ENCODE measurements at regions of chr11 and their contacts with region 1.

Region 1: DNA sequence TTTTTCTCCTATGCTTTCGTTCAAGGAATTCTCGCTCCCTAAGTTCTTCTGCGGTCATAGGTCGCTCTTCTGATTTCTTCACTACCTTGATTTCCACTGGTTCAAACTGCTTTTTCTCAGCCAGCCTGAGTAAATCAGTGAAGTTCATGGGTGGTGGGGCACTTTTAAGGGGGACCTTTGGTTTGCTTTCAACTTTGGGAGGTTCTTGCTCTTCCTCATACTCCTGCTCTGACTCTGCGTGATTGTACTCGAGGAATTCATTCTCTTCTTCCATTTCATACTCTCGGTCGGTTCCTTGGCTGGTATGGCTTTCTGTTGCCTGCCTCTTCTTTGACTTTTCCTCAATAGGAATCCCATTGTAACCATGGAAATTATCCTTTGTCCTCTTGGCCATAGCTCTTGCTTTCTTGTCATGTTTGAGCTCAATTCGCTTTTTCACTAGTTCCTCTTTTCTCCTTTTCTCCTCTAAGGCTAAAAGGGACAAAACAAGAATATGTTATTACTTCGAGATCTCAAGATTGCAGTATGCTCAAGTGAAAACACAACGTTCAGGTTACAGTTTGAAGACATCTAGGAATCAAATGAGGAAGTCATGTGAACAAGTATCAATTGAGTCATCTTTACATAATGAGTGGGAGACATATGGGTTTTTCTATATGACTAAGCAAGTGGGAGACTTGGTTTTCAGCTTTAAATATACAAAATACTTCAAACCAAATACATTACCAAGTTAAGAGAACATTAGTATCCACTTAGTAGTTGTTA is 16.2 kb downstream of the MISFA start:
- DNase-seq: no peak
- ATAC-seq: peak; percentile 44
- H3K4me3 ChIP-seq: no peak overlapping the region
- H3K4me3 Mint-ChIP-seq: peak overlapping the region in 1 of 10 donors; percentile 71
- H3K27ac ChIP-seq: no peak overlapping the region
- H3K27ac Mint-ChIP-seq: peak overlapping the region in 3 of 9 donors; percentile 26 to 72 (median 28)
- H3K4me1 ChIP-seq: peaks cover 21 to 29% of the 10 kb centered on the region in 2 donors
- H3K4me1 Mint-ChIP-seq: peaks cover 26 to 59% (median 47%) of the 10 kb centered on the region in 7 donors
- H3K27me3 ChIP-seq: no peaks in the 10 kb centered on the region
- H3K27me3 Mint-ChIP-seq: no peaks in the 10 kb centered on the region

Region 2: GRCh38 chr11:18578975-18579598 is 36.7 kb before region 1 on chr11:
- CTCF ChIA-PET with region 1: interaction called, 3 read pairs
- POLR2A ChIA-PET with region 1: no interaction called
- intact Hi-C with region 1: loop called in 1 of 2 experiments (anchors 1 kb)
- DNase-seq: no peak
- ATAC-seq: peak; percentile 24
- H3K4me3 ChIP-seq: no peak overlapping the region
- H3K4me3 Mint-ChIP-seq: peak overlapping the region in 2 of 10 donors; percentile 29 to 67
- H3K27ac ChIP-seq: no peak overlapping the region
- H3K27ac Mint-ChIP-seq: peak overlapping the region in 1 of 9 donors; percentile 51
- H3K4me1 ChIP-seq: no peaks in the 10 kb centered on the region
- H3K4me1 Mint-ChIP-seq: peaks cover 0 to 40% (median 2%) of the 10 kb centered on the region in 7 donors
- H3K27me3 ChIP-seq: no peaks in the 10 kb centered on the region
- H3K27me3 Mint-ChIP-seq: no peaks in the 10 kb centered on the region

Region 3: GRCh38 chr11:18588297-18589252 is 27.2 kb before region 1 on chr11 and contains the start of gene UEVLD:
- CTCF ChIA-PET with region 1: no interaction called
- POLR2A ChIA-PET with region 1: no interaction called
- intact Hi-C with region 1: loop called (anchors 1 to 2 kb)
- DNase-seq: peak; percentile 18 to 82 (median 23)
- ATAC-seq: peak; percentile 62
- H3K4me3 ChIP-seq: peak within 1 kb of the TSS; percentile 63
- H3K4me3 Mint-ChIP-seq: no peak within 1 kb of the TSS
- H3K27ac ChIP-seq: peak within 1 kb of the TSS; percentile 68
- H3K27ac Mint-ChIP-seq: no peak within 1 kb of the TSS
- H3K4me1 ChIP-seq: peaks cover 8 to 15% of the 10 kb centered on the region in 2 donors
- H3K4me1 Mint-ChIP-seq: peaks cover 0 to 19% (median 0%) of the 10 kb centered on the region in 7 donors
- H3K27me3 ChIP-seq: no peaks in the 10 kb centered on the region
- H3K27me3 Mint-ChIP-seq: no peaks in the 10 kb centered on the region
- total RNA-seq, gene UEVLD: 3.6 to 19.8 (median 5.8) TPM

Region 4: GRCh38 chr11:18684267-18684666 is 68.5 kb after region 1 on chr11:
- CTCF ChIA-PET with region 1: no interaction called
- POLR2A ChIA-PET with region 1: no interaction called
- intact Hi-C with region 1: no loop called
- DNase-seq: no peak
- ATAC-seq: no peak
- H3K4me3 ChIP-seq: no peak overlapping the region
- H3K4me3 Mint-ChIP-seq: no peak overlapping the region
- H3K27ac ChIP-seq: no peak overlapping the region
- H3K27ac Mint-ChIP-seq: peak overlapping the region in 1 of 9 donors; percentile 16
- H3K4me1 ChIP-seq: peaks cover 0 to under 1% of the 10 kb centered on the region in 2 donors
- H3K4me1 Mint-ChIP-seq: peaks cover 0 to 9% (median 5%) of the 10 kb centered on the region in 7 donors
- H3K27me3 ChIP-seq: no peaks in the 10 kb centered on the region
- H3K27me3 Mint-ChIP-seq: peaks cover 0 to 15% (median 0%) of the 10 kb centered on the region in 5 donors

Region 5: DNA sequence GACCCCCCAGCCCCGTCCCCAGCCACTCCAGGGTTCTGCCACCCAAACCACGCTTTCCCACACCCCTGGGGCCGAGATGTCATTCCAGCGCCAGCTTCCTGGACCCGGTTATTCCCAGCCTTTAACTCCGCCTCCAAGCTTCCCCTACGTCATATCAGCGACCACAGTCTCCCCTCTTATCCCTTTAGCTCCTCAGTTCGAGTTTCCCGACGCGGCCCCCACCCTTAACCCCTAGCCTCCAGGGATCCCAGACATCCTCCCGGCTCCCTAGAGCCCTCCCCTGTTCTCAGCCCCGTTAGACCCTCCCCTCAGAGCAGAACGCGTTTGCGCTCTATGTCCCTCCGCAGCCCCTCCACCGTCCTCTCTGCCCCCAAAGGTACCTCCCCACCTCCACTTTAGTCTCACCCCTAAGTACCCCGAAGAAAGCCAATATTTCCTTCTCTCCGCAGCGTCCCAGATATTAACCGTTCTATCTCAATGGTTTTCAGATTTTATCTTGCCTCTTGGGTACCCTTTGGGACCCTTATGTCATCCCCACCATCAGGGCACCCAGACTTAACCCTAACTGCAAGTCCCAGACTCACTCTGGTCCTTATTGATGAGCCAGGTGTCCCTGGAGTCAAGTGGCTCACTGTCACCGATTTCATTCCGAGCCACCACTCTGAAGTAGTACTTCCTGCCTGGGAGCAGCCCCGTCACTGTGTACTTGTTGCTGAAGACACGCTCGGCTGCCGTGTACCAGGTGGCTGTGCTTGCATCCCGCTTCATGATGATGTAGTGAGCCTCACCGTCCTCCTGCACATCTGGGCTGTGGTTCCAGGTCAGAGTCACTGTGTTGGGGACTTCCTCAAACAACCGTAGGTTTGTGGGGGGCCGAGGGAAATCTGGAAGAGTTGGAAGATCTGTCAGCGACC is 90.8 kb after region 1 on chr11:
- CTCF ChIA-PET with region 1: no interaction called
- POLR2A ChIA-PET with region 1: no interaction called
- intact Hi-C with region 1: loop called in 1 of 2 experiments (anchors 5 kb)
- DNase-seq: peak in 8 of 9 donors; percentile 34 to 73 (median 64)
- ATAC-seq: peak; percentile 83
- H3K4me3 ChIP-seq: peak overlapping the region; percentile 88
- H3K4me3 Mint-ChIP-seq: peak overlapping the region; percentile 90 to 98 (median 93)
- H3K27ac ChIP-seq: peak overlapping the region; percentile 68
- H3K27ac Mint-ChIP-seq: peak overlapping the region; percentile 81 to 98 (median 90)
- H3K4me1 ChIP-seq: peaks cover 9 to 10% of the 10 kb centered on the region in 2 donors
- H3K4me1 Mint-ChIP-seq: peaks cover 15 to 29% (median 25%) of the 10 kb centered on the region in 7 donors
- H3K27me3 ChIP-seq: no peaks in the 10 kb centered on the region
- H3K27me3 Mint-ChIP-seq: peaks cover 0 to 55% (median 0%) of the 10 kb centered on the region in 5 donors

Region 6: DNA sequence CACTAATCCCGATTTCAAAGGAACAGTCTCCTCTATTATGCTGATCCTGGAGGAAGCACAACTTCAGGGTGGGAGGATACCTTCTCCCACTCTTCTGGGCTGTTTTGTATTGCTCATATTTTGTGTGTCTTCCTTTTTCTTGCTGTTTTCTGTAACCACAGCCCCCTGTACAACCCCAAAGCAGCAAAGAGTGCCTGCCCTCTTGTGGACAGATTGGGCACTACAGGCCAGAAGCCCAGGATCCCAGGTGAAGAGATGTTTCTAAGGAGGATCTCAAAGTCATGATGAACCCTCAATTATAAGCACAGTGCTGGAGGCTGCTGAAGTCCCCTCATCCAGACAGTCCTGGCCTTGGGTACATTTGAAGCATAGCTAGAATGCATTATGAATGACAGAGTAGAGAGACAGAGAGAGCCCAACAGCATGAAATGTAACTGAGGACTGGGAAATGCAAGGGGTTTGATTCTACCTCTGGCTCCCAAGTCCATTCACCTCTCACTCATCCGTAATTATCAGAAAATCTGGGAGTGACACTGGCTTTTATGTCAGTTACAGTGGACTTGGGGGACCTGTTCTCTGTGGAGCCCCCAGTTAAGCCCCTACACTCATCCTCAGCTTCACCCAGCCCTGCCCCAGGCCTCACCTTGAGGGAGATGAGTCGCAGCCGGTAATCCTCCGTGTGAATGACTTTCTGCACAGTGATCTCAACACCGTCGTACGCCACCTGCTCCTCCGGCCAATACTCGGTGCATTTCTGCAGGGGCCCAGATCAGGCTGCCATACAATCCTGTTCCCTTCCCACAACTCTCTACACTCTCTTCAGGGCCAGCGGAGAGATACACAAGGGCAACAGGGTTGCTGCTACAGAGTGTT is 116.4 kb after region 1 on chr11:
- CTCF ChIA-PET with region 1: interaction called, 3 read pairs
- POLR2A ChIA-PET with region 1: no interaction called
- intact Hi-C with region 1: loop called in 1 of 2 experiments (anchors 2 kb)
- DNase-seq: peak; percentile 44 to 81 (median 65)
- ATAC-seq: peak; percentile 79
- H3K4me3 ChIP-seq: no peak overlapping the region
- H3K4me3 Mint-ChIP-seq: no peak overlapping the region
- H3K27ac ChIP-seq: no peak overlapping the region
- H3K27ac Mint-ChIP-seq: peak overlapping the region in 1 of 9 donors; percentile 32
- H3K4me1 ChIP-seq: peaks cover 5 to 6% of the 10 kb centered on the region in 2 donors
- H3K4me1 Mint-ChIP-seq: peaks cover 4 to 15% (median 13%) of the 10 kb centered on the region in 7 donors
- H3K27me3 ChIP-seq: no peaks in the 10 kb centered on the region
- H3K27me3 Mint-ChIP-seq: peaks cover 0 to 9% (median 0%) of the 10 kb centered on the region in 5 donors

Measured in naive thymus-derived CD4-positive, alpha-beta T cell (primary cell).